Naive thymus-derived CD4-positive, alpha-beta T cell (primary cell): ENCODE measurements at regions of chr14 and their contacts with region 1.

Region 1: GRCh38 chr14:24160850-24161804 is at the start of gene IRF9:
- DNase-seq: peak; percentile 93 to 98 (median 96)
- ATAC-seq: peak; percentile 98
- H3K4me3 ChIP-seq: peak within 1 kb of the TSS; percentile 89
- H3K4me3 Mint-ChIP-seq: peak within 1 kb of the TSS; percentile 95 to 100 (median 100)
- H3K27ac ChIP-seq: peak within 1 kb of the TSS; percentile 99
- H3K27ac Mint-ChIP-seq: peak within 1 kb of the TSS; percentile 98 to 100 (median 100)
- H3K4me1 ChIP-seq: peaks cover 34 to 45% of the 10 kb centered on the region in 2 donors
- H3K4me1 Mint-ChIP-seq: peaks cover 38 to 69% (median 56%) of the 10 kb centered on the region in 7 donors
- H3K27me3 ChIP-seq: no peaks in the 10 kb centered on the region
- H3K27me3 Mint-ChIP-seq: peaks cover 0 to 4% (median 0%) of the 10 kb centered on the region in 5 donors
- total RNA-seq, gene IRF9: 133 to 337 (median 189) TPM

Region 2: GRCh38 chr14:23929822-23930294 is 231.3 kb before region 1 on chr14:
- CTCF ChIA-PET with region 1: no interaction called
- POLR2A ChIA-PET with region 1: no interaction called
- intact Hi-C with region 1: no loop called
- DNase-seq: peak; percentile 54 to 81 (median 71)
- ATAC-seq: peak; percentile 92
- H3K4me3 ChIP-seq: no peak overlapping the region
- H3K4me3 Mint-ChIP-seq: no peak overlapping the region
- H3K27ac ChIP-seq: no peak overlapping the region
- H3K27ac Mint-ChIP-seq: no peak overlapping the region
- H3K4me1 ChIP-seq: no peaks in the 10 kb centered on the region
- H3K4me1 Mint-ChIP-seq: no peaks in the 10 kb centered on the region
- H3K27me3 ChIP-seq: no peaks in the 10 kb centered on the region
- H3K27me3 Mint-ChIP-seq: peaks cover 0 to 8% (median 0%) of the 10 kb centered on the region in 5 donors

Region 3: DNA sequence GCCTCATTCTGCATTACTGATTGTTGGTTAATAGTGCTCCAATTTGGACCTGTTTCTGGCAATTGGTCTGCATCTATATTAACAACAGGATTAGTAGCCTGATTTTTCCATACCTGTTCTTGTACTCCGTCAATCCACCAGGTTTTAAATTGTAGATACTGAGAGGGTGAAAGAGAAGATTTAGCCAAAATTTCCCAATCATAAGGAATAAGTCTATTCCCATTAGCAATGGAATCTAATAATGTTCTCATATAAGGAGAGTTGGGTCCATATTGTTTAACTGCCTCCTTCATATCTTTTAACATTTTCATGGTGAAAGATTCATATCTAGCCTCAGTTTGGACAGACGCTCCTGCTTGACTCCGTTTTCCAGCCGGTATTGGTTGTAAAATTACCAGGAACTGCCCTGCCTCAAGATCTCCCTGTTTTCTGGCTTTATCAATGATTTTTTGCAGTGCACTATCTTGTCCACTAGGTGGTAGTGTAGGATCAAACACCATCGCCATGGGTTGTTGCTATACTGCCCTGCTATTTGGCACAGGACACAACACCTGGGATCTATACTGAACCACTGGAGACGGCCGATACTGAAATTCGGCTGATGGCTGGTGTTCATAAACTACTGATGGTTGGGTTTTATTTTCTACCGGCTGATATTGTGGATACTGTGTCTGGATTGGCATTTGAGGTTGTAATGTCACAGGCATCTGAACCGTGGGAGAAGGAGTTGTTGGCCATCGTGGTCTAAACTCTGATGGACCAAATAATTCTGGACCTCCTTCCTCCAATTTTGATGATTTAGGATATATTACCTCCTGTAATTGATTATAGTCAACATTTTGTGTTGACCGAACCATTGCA is 147.2 kb before region 1 on chr14:
- CTCF ChIA-PET with region 1: no interaction called
- POLR2A ChIA-PET with region 1: interaction called, 3 read pairs
- intact Hi-C with region 1: loop called in 1 of 2 experiments (anchors 1 kb)
- DNase-seq: peak in 8 of 9 donors; percentile 17 to 76 (median 67)
- ATAC-seq: peak; percentile 94
- H3K4me3 ChIP-seq: no peak overlapping the region
- H3K4me3 Mint-ChIP-seq: no peak overlapping the region
- H3K27ac ChIP-seq: no peak overlapping the region
- H3K27ac Mint-ChIP-seq: no peak overlapping the region
- H3K4me1 ChIP-seq: peaks cover 0 to 6% of the 10 kb centered on the region in 2 donors
- H3K4me1 Mint-ChIP-seq: peaks cover 8 to 28% (median 25%) of the 10 kb centered on the region in 7 donors
- H3K27me3 ChIP-seq: no peaks in the 10 kb centered on the region
- H3K27me3 Mint-ChIP-seq: peaks cover 0 to 15% (median 0%) of the 10 kb centered on the region in 5 donors

Region 4: GRCh38 chr14:24093901-24094761 is 67.0 kb before region 1 on chr14 and contains the start of gene PCK2:
- CTCF ChIA-PET with region 1: interaction called, 3 read pairs
- POLR2A ChIA-PET with region 1: interaction called, 9 read pairs
- intact Hi-C with region 1: loop called (anchors 1 kb)
- DNase-seq: peak; percentile 44 to 80 (median 56)
- ATAC-seq: peak; percentile 81
- H3K4me3 ChIP-seq: peak within 1 kb of the TSS; percentile 91
- H3K4me3 Mint-ChIP-seq: peak within 1 kb of the TSS; percentile 91 to 100 (median 98)
- H3K27ac ChIP-seq: peak within 1 kb of the TSS; percentile 92
- H3K27ac Mint-ChIP-seq: peak within 1 kb of the TSS; percentile 90 to 97 (median 96)
- H3K4me1 ChIP-seq: peaks cover 6 to 16% of the 10 kb centered on the region in 2 donors
- H3K4me1 Mint-ChIP-seq: peaks cover 28 to 47% (median 41%) of the 10 kb centered on the region in 7 donors
- H3K27me3 ChIP-seq: no peaks in the 10 kb centered on the region
- H3K27me3 Mint-ChIP-seq: no peaks in the 10 kb centered on the region
- total RNA-seq, gene PCK2: 9.1 to 56.2 (median 14.4) TPM

Region 5: DNA sequence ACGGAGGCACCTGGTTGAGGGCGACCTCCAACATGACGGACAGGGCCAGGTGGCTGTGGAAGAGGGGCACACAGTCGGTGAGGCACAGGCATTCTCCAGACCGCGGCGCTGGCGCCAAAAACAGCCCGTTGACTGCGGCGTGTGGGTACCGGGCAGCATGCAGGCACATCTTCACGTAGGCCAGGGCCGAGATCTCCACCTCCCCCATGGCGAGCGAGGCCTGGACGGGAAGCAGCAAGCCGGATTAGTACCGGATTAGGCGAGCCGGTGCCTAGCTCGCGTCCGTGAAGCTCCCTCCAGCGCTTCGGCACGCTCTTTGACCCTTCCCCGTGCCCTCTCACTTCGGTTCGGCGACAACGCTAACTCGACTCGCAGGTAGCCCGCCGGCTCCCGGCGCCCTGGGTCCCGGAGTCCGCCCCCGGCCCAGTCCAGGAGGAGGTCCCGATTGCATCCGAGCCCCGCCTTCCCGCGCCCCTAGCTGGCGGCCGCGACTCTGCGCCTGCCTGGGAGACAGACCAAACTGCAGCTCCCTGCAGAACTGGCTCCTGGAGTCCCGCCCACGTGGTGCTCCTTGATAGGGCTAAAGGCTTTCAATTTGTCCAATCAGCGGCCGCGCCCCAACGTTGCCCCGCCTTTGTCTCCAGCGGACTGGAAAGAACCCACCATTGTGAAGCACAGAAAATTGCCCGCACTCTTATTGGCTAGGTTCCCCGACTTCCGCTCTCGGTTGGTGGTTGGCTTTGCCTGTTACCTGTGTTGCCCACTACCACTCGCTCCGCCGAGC is 19.8 kb before region 1 on chr14 and contains the start of gene EMC9:
- CTCF ChIA-PET with region 1: interaction called, 36 read pairs
- POLR2A ChIA-PET with region 1: interaction called, 37 read pairs
- intact Hi-C with region 1: loop called (anchors 1 kb)
- DNase-seq: peak; percentile 90 to 100 (median 99)
- ATAC-seq: peak; percentile 94
- H3K4me3 ChIP-seq: peak within 1 kb of the TSS; percentile 87
- H3K4me3 Mint-ChIP-seq: peak within 1 kb of the TSS; percentile 85 to 100 (median 94)
- H3K27ac ChIP-seq: peak within 1 kb of the TSS; percentile 83
- H3K27ac Mint-ChIP-seq: peak within 1 kb of the TSS; percentile 83 to 96 (median 93)
- H3K4me1 ChIP-seq: peaks cover 33 to 43% of the 10 kb centered on the region in 2 donors
- H3K4me1 Mint-ChIP-seq: peaks cover 47 to 87% (median 77%) of the 10 kb centered on the region in 7 donors
- H3K27me3 ChIP-seq: no peaks in the 10 kb centered on the region
- H3K27me3 Mint-ChIP-seq: no peaks in the 10 kb centered on the region
- total RNA-seq, gene EMC9: 9.0 to 25.5 (median 22.3) TPM

Region 6: GRCh38 chr14:24188251-24189058 is 27.3 kb after region 1 on chr14 and contains the start of gene IPO4:
- CTCF ChIA-PET with region 1: interaction called, 7 read pairs
- POLR2A ChIA-PET with region 1: interaction called, 11 read pairs
- intact Hi-C with region 1: loop called (anchors 1 kb)
- DNase-seq: peak; percentile 75 to 97 (median 94)
- ATAC-seq: peak; percentile 97
- H3K4me3 ChIP-seq: peak within 1 kb of the TSS; percentile 89
- H3K4me3 Mint-ChIP-seq: peak within 1 kb of the TSS; percentile 89 to 96 (median 90)
- H3K27ac ChIP-seq: peak within 1 kb of the TSS; percentile 83
- H3K27ac Mint-ChIP-seq: peak within 1 kb of the TSS; percentile 82 to 96 (median 92)
- H3K4me1 ChIP-seq: peaks cover 15 to 16% of the 10 kb centered on the region in 2 donors
- H3K4me1 Mint-ChIP-seq: peaks cover 24 to 53% (median 47%) of the 10 kb centered on the region in 7 donors
- H3K27me3 ChIP-seq: no peaks in the 10 kb centered on the region
- H3K27me3 Mint-ChIP-seq: no peaks in the 10 kb centered on the region
- total RNA-seq, gene IPO4: 21.5 to 45.2 (median 42.2) TPM

Region 7: GRCh38 chr14:24232121-24232644 is 71.1 kb after region 1 on chr14 and contains the start of gene NEDD8:
- CTCF ChIA-PET with region 1: no interaction called
- POLR2A ChIA-PET with region 1: interaction called, 4 read pairs
- intact Hi-C with region 1: loop called (anchors 1 kb)
- DNase-seq: peak; percentile 72 to 91 (median 88)
- ATAC-seq: peak; percentile 91
- H3K4me3 ChIP-seq: peak within 1 kb of the TSS; percentile 99
- H3K4me3 Mint-ChIP-seq: peak within 1 kb of the TSS; percentile 86 to 100 (median 96)
- H3K27ac ChIP-seq: peak within 1 kb of the TSS; percentile 89
- H3K27ac Mint-ChIP-seq: peak within 1 kb of the TSS; percentile 89 to 98 (median 93)
- H3K4me1 ChIP-seq: peaks cover 11 to 27% of the 10 kb centered on the region in 2 donors
- H3K4me1 Mint-ChIP-seq: peaks cover 36 to 79% (median 63%) of the 10 kb centered on the region in 7 donors
- H3K27me3 ChIP-seq: no peaks in the 10 kb centered on the region
- H3K27me3 Mint-ChIP-seq: no peaks in the 10 kb centered on the region
- total RNA-seq, gene NEDD8: 73.5 to 175 (median 106) TPM

Region 8: DNA sequence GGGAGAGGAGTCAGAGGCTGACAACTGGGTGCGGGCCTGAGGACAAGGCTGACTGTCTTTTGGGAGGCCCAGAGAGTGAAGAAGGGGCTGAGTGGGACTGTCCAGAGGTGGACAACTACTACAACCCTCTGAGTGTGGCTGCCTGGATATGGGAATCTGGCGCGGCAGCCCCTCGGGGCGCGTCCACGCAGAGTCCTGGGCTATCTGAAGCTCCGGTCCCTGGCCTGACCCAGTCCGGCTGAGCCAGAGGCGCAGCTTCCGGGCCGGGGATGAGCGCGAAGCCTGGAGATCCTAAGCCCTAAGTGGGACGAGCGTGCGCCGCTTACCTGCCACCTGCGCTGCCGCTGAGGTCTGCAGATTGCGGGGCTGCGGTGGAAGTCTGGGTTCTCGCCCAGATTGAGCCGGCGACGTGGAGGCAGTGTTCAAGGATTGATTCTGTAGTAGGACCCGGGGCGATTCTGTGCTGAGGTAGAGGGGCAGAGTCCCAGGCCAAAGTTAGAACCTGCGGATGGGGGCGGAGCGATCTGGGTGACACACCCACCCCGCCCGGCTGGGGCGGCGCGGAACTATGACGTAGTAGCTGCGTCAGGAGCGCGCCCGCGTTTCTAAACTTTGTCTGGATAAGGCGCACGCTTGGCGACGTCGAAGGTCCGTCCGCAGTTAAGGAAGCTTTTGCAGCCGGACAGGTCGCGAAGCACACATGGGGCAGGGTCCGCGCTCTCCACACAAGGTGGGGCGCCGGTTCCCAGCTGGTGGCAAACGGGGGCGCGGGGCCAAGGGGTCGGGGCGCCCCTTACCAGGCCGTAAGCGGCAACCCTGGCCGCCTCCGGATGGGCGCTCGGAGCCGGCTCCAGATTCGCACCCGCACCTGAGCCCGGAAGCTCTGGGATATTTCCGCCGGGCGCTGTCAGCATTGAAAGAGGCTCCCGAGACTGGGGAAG is 138.4 kb after region 1 on chr14 and contains the starts of genes DHRS1 and NOP9:
- CTCF ChIA-PET with region 1: interaction called, 5 read pairs
- POLR2A ChIA-PET with region 1: no interaction called
- intact Hi-C with region 1: loop called in 1 of 2 experiments (anchors 1 kb)
- DNase-seq: peak; percentile 86 to 95 (median 92)
- ATAC-seq: peak; percentile 93
- H3K4me3 ChIP-seq: peak within 1 kb of the TSS; percentile 83
- H3K4me3 Mint-ChIP-seq: peak within 1 kb of the TSS; percentile 89 to 97 (median 94)
- H3K27ac ChIP-seq: peak within 1 kb of the TSS; percentile 97
- H3K27ac Mint-ChIP-seq: peak within 1 kb of the TSS; percentile 91 to 98 (median 96)
- H3K4me1 ChIP-seq: peaks cover 19 to 43% of the 10 kb centered on the region in 2 donors
- H3K4me1 Mint-ChIP-seq: peaks cover 28 to 67% (median 55%) of the 10 kb centered on the region in 7 donors
- H3K27me3 ChIP-seq: no peaks in the 10 kb centered on the region
- H3K27me3 Mint-ChIP-seq: no peaks in the 10 kb centered on the region
- total RNA-seq, gene DHRS1: 25.2 to 37.0 (median 33.3) TPM
- total RNA-seq, gene NOP9: 22.7 to 39.5 (median 29.8) TPM